SK-N-SH (cell line): ENCODE measurements at regions of chr11 and their contacts with region 1.

Region 1: GRCh38 chr11:36041988-36042611 is 98.2 kb downstream of the LDLRAD3 start:
- DNase-seq: no peak
- H3K4me3 ChIP-seq: no peak overlapping the region
- H3K27ac ChIP-seq: no peak overlapping the region
- H3K4me1 ChIP-seq: peaks cover 0 to 5% of the 10 kb centered on the region in 2 experiments; a peak in 1 of 4 replicates
- H3K27me3 ChIP-seq: no peaks in the 10 kb centered on the region
- CTCF ChIP-seq: peak; percentile 50
- EP300 ChIP-seq: no peak
- RAD21 ChIP-seq: peak; percentile 49

Region 2: GRCh38 chr11:36056160-36056751 is 14.2 kb after region 1 on chr11:
- CTCF ChIA-PET with region 1: interaction called, 10 read pairs
- POLR2A ChIA-PET with region 1: no interaction called
- DNase-seq: peak; percentile 55
- H3K4me3 ChIP-seq: no peak overlapping the region
- H3K27ac ChIP-seq: no peak overlapping the region
- H3K4me1 ChIP-seq: peaks cover 0 to 2% of the 10 kb centered on the region in 2 experiments; a peak in 1 of 4 replicates
- H3K27me3 ChIP-seq: no peaks in the 10 kb centered on the region
- CTCF ChIP-seq: peak; percentile 66
- EP300 ChIP-seq: no peak
- RAD21 ChIP-seq: peak; percentile 78

Region 3: DNA sequence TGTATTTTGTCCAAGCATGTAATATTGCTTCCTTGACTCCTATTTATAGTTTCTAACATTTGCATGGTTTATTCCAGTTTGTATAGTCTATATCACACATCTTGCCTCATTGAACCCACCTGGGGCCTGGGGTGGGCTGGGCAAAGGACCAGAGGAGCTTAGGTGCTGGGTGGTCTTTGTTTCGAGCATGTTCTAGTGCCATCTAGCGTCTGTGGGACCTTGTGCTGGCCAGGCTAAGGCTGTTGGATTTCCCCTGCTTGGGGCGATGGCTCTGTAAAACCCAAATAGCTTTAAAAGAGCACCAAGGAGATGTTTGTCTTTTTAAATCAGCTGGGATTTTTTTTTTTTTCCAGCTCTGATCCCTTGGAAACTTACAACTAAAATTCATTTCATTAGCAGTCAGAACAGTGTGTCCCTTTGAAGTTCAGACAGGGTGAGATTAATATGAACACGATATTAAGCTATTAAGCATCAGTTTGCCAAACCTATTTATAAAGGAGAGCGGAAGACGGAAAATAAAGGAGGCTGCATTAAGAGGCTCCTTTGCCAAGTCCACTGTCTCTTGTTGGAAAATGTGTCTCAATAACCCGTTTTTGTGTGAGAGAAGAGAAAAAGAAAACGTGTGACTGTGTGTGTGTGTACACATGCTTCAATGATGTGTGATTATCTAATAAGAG is 89.8 kb after region 1 on chr11:
- CTCF ChIA-PET with region 1: interaction called, 11 read pairs
- POLR2A ChIA-PET with region 1: no interaction called
- DNase-seq: peak; percentile 65
- H3K4me3 ChIP-seq: no peak overlapping the region; a peak in 1 of 4 replicates
- H3K27ac ChIP-seq: no peak overlapping the region
- H3K4me1 ChIP-seq: peaks cover 0 to 5% of the 10 kb centered on the region in 2 experiments; a peak in 3 of 4 replicates
- H3K27me3 ChIP-seq: no peaks in the 10 kb centered on the region
- CTCF ChIP-seq: peak; percentile 50
- EP300 ChIP-seq: no peak
- RAD21 ChIP-seq: peak; percentile 74

Region 4: GRCh38 chr11:36258730-36259360 is 216.7 kb after region 1 on chr11:
- CTCF ChIA-PET with region 1: interaction called, 20 read pairs
- POLR2A ChIA-PET with region 1: no interaction called
- DNase-seq: peak; percentile 66
- H3K4me3 ChIP-seq: no peak overlapping the region
- H3K27ac ChIP-seq: no peak overlapping the region
- H3K4me1 ChIP-seq: peaks cover 0 to 5% of the 10 kb centered on the region in 2 experiments; a peak in 2 of 4 replicates
- H3K27me3 ChIP-seq: no peaks in the 10 kb centered on the region
- CTCF ChIP-seq: peak; percentile 62
- EP300 ChIP-seq: no peak
- RAD21 ChIP-seq: peak; percentile 85